ENCODE measurements at regions of chr15 and their contacts with region 1.

Region 1: DNA sequence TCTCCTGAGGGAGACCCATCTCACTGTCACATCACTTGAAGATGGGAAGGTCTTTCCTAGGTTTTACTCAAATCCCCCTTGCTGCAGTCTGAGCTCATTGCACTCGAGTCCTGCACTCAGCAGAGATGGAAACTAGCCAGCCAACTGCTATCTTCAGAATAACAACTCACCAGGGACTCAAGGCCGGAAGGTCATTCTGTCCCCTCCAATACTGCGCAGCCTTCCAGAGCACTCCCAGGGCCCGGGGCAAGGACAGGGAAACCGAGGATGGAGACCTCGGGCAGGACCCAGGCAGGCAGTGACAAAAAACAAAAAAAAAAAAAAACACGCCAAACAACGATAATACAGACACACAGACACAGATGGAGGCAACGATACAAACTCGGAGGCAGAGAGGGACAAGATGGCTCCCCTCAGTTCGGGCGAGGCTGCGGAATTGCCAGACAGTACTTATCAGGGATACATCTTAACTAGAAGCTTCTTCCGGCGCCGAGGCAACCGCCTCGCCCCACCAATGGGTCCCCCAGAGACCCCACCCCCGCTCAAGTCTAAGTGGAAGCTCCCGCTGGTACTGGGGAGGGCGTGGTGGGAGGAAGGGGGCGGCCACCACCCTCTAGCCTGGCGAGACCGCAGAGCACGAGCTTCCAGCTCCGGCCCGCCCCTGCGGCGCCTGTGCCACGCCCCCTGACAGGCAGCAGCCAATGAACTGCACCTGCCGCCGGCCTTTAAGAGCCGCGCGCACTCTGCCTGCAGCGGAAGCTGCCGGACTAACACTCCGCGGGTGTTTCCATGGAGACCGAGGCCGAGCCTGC is 7.0 kb upstream of the MAP1A start:
- DNase-seq: peak; percentile 97 to 100 (median 99)

Region 2: DNA sequence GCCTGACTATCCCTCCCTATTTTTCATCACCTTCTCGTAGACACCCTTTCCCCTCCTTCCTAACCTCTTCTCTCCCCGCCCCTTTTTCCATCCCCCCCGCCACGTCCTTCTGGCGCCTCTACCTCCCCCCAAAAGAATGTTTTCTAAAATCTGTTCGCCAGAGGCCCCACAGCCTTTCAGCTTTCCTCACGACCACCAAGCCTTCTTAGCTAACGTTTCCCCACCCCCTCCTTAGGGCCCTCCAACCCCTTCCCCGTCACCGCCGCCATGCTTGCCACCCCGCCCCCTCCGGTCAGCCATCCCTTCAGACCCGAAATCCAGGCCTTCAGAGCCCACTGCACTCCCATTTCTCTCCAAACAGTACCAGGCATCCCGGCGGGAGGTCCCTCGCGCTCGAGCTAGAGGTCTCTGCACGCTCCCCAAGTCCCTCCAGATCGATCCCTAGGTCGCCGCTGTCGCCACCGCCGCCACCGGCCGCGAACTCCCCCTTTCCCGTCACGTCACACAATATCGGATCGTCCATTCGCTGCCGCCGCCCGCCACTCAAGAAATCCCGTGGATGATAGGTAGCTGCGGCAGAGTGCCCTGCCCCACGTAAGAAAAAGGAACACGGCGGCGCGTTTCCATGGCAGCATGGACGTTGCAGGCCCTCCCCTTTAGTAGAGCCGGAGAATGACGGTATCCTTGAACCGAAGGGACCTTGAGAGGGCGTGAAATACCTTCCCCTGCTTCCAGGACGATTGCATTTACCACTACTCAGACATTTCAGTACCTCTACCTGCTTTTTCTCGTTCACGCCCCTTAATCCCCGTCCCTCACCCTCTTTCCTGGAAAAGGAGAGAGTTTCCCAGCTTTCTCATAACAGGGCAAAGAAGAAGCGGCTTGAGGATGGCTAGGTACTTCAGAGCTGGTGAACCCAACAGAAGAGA is 17.5 kb before region 1 on chr15 and contains the start of gene TP53BP1:
- intact Hi-C with region 1: loop called (anchors 2 kb)
- DNase-seq: peak; percentile 94 to 99 (median 98)

Region 3: DNA sequence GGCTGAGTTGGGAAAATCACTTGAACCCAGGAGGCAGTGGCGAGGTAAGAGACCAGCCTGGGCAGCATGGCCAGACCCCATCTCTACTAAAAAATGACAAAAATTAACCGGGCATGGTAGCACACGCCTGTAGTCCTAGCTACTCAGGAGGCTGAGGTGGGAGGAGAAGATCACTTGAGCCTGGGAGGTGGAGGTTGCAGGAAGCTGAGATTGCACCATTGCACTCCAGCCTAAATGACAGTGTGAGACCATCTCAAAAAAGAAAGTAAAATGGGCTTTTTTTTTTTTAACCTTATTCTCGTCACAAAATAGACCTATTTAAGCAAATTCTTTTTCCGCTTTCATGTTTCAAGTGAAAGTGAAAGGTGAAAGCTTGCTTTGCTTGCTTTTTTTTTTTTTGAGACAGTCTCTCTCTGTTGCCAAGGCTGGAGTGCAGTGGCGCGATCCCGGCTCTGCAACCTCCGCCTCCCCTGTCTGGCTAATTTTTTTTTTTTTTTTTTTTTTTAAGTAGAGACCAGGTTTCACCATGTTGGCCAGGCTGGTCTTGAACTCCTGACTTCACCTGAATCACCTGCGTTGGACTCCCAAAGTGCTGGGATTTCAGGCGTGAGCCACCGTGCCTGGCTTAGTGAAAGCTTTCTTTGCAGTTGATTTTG is 239.4 kb after region 1 on chr15:
- intact Hi-C with region 1: loop called (anchors 5 kb)
- DNase-seq: peak in 2 of 42 donors; percentile 12 to 40

Measured in head of caudate nucleus (tissue), 42 donors.